ENCODE measurements at regions of chr7 and their contacts with region 1.

Region 1: GRCh38 chr7:44606450-44607254 is at the start of gene OGDH:
- DNase-seq: peak; percentile 97 to 100 (median 99)
- ATAC-seq: peak; percentile 91
- H3K4me3 ChIP-seq: peak within 1 kb of the TSS; percentile 69
- H3K4me3 Mint-ChIP-seq: peak within 1 kb of the TSS; percentile 100
- H3K27ac ChIP-seq: peak within 1 kb of the TSS; percentile 86 to 99
- H3K27ac Mint-ChIP-seq: peak within 1 kb of the TSS; percentile 100
- H3K4me1 ChIP-seq: peaks cover 43% of the 10 kb centered on the region
- H3K4me1 Mint-ChIP-seq: peaks cover 44% of the 10 kb centered on the region
- H3K27me3 ChIP-seq: no peaks in the 10 kb centered on the region
- H3K27me3 Mint-ChIP-seq: peaks cover 5% of the 10 kb centered on the region
- CTCF ChIP-seq: no peak
- total RNA-seq, gene OGDH: 39.8 to 43.8 TPM

Region 2: GRCh38 chr7:44534501-44534900 is 72.2 kb before region 1 on chr7:
- CTCF ChIA-PET with region 1: no interaction called
- POLR2A ChIA-PET with region 1: no interaction called
- intact Hi-C with region 1: no loop called
- DNase-seq: peak in 11 of 14 experiments; percentile 2 to 66 (median 24)
- ATAC-seq: peak; percentile 74
- H3K4me3 ChIP-seq: no peak overlapping the region
- H3K4me3 Mint-ChIP-seq: no peak overlapping the region
- H3K27ac ChIP-seq: no peak overlapping the region
- H3K27ac Mint-ChIP-seq: no peak overlapping the region
- H3K4me1 ChIP-seq: no peaks in the 10 kb centered on the region
- H3K4me1 Mint-ChIP-seq: no peaks in the 10 kb centered on the region
- H3K27me3 ChIP-seq: no peaks in the 10 kb centered on the region
- H3K27me3 Mint-ChIP-seq: no peaks in the 10 kb centered on the region
- CTCF ChIP-seq: peak; percentile 52

Region 3: GRCh38 chr7:44547536-44548231 is 59.0 kb before region 1 on chr7:
- CTCF ChIA-PET with region 1: no interaction called
- POLR2A ChIA-PET with region 1: no interaction called
- intact Hi-C with region 1: no loop called
- DNase-seq: no peak
- ATAC-seq: no peak
- H3K4me3 ChIP-seq: no peak overlapping the region
- H3K4me3 Mint-ChIP-seq: no peak overlapping the region
- H3K27ac ChIP-seq: no peak overlapping the region
- H3K27ac Mint-ChIP-seq: no peak overlapping the region
- H3K4me1 ChIP-seq: no peaks in the 10 kb centered on the region
- H3K4me1 Mint-ChIP-seq: no peaks in the 10 kb centered on the region
- H3K27me3 ChIP-seq: no peaks in the 10 kb centered on the region
- H3K27me3 Mint-ChIP-seq: peaks cover 5% of the 10 kb centered on the region
- CTCF ChIP-seq: no peak

Region 4: GRCh38 chr7:44559485-44559884 is 47.2 kb before region 1 on chr7:
- CTCF ChIA-PET with region 1: no interaction called
- POLR2A ChIA-PET with region 1: no interaction called
- intact Hi-C with region 1: no loop called
- DNase-seq: no peak
- ATAC-seq: no peak
- H3K4me3 ChIP-seq: no peak overlapping the region
- H3K4me3 Mint-ChIP-seq: no peak overlapping the region
- H3K27ac ChIP-seq: no peak overlapping the region
- H3K27ac Mint-ChIP-seq: peak overlapping the region; percentile 17
- H3K4me1 ChIP-seq: no peaks in the 10 kb centered on the region
- H3K4me1 Mint-ChIP-seq: no peaks in the 10 kb centered on the region
- H3K27me3 ChIP-seq: no peaks in the 10 kb centered on the region
- H3K27me3 Mint-ChIP-seq: no peaks in the 10 kb centered on the region
- CTCF ChIP-seq: no peak

Region 5: GRCh38 chr7:44573464-44574286 is 33.0 kb before region 1 on chr7 and contains the start of gene DDX56:
- CTCF ChIA-PET with region 1: no interaction called
- POLR2A ChIA-PET with region 1: interaction called, 26 read pairs
- intact Hi-C with region 1: no loop called
- DNase-seq: peak; percentile 83 to 97 (median 90)
- ATAC-seq: peak; percentile 96
- H3K4me3 ChIP-seq: peak within 1 kb of the TSS; percentile 71
- H3K4me3 Mint-ChIP-seq: peak within 1 kb of the TSS; percentile 95
- H3K27ac ChIP-seq: peak within 1 kb of the TSS; percentile 77 to 82
- H3K27ac Mint-ChIP-seq: peak within 1 kb of the TSS; percentile 99
- H3K4me1 ChIP-seq: peaks cover 35% of the 10 kb centered on the region
- H3K4me1 Mint-ChIP-seq: peaks cover 48% of the 10 kb centered on the region
- H3K27me3 ChIP-seq: no peaks in the 10 kb centered on the region
- H3K27me3 Mint-ChIP-seq: no peaks in the 10 kb centered on the region
- CTCF ChIP-seq: no peak
- total RNA-seq, gene DDX56: 126 to 127 TPM

Region 6: GRCh38 chr7:44622307-44623151 is 15.9 kb after region 1 on chr7:
- CTCF ChIA-PET with region 1: interaction called, 4 read pairs
- POLR2A ChIA-PET with region 1: interaction called, 229 read pairs
- intact Hi-C with region 1: no loop called
- DNase-seq: peak in 6 of 14 experiments; percentile 22 to 66 (median 58)
- ATAC-seq: peak; percentile 67
- H3K4me3 ChIP-seq: peak overlapping the region; percentile 23
- H3K4me3 Mint-ChIP-seq: peak overlapping the region; percentile 13
- H3K27ac ChIP-seq: peak overlapping the region in 1 of 2 donors; percentile 85
- H3K27ac Mint-ChIP-seq: peak overlapping the region; percentile 84
- H3K4me1 ChIP-seq: peaks cover 84% of the 10 kb centered on the region
- H3K4me1 Mint-ChIP-seq: peaks cover 87% of the 10 kb centered on the region
- H3K27me3 ChIP-seq: no peaks in the 10 kb centered on the region
- H3K27me3 Mint-ChIP-seq: no peaks in the 10 kb centered on the region
- CTCF ChIP-seq: no peak

Region 7: DNA sequence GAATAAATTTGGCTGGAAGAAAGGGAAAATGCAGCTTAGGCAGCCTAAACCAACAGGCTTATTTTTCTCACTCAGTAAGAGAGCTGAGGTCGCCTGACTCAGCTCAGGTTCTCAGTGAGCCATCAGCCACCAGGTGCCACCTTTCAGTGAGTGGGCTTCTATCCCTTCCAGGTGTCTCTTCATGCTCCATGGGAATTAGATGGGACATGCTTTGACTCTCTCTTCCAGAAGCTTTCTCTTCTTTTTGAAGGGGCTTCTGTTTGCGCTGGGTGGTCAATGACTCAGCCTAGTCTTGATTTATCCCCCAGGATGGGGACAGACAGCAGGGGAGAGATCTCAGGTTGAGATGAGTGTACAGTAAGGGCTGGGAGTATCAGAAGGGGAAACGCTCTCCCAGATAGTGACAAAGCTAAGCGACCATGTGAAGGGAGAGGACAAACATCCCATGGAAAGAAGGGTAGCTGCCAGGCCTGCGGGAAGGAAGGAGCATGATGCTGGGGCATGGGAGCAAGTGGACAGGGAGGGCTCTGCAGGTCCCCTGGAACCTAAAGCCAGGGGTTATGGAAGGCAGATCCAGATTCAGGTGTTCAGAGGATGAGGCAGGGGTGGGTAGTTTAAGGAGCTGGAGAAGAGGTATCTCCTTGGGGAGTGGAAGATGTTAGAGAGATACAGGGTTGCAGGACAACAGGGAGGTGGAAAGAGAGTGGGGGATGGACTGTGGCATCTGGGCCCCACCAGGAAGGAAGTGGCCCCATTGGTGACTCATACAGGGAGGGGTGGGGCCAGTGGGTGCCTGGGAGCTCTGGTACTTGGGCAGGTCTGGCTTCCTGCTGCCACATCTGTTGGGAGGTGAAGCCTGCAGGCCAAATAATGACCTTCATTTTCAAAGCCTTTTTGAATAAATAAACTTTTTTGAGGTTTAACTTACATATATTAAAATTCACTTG is 32.2 kb after region 1 on chr7:
- CTCF ChIA-PET with region 1: interaction called, 9 read pairs
- POLR2A ChIA-PET with region 1: interaction called, 229 read pairs
- intact Hi-C with region 1: loop called (anchors 1 to 2 kb)
- DNase-seq: peak; percentile 58 to 93 (median 78)
- ATAC-seq: peak; percentile 55
- H3K4me3 ChIP-seq: peak overlapping the region; percentile 21
- H3K4me3 Mint-ChIP-seq: peak overlapping the region; percentile 89
- H3K27ac ChIP-seq: peak overlapping the region; percentile 90 to 95
- H3K27ac Mint-ChIP-seq: peak overlapping the region; percentile 96
- H3K4me1 ChIP-seq: peaks cover 86% of the 10 kb centered on the region
- H3K4me1 Mint-ChIP-seq: peaks cover 72% of the 10 kb centered on the region
- H3K27me3 ChIP-seq: no peaks in the 10 kb centered on the region
- H3K27me3 Mint-ChIP-seq: no peaks in the 10 kb centered on the region
- CTCF ChIP-seq: no peak

Region 8: GRCh38 chr7:44767912-44768627 is 161.4 kb after region 1 on chr7:
- CTCF ChIA-PET with region 1: no interaction called
- POLR2A ChIA-PET with region 1: interaction called, 14 read pairs
- intact Hi-C with region 1: no loop called
- DNase-seq: peak in 10 of 14 experiments; percentile 19 to 68 (median 40)
- ATAC-seq: peak; percentile 88
- H3K4me3 ChIP-seq: no peak overlapping the region
- H3K4me3 Mint-ChIP-seq: peak overlapping the region; percentile 8
- H3K27ac ChIP-seq: peak overlapping the region; percentile 14 to 48
- H3K27ac Mint-ChIP-seq: peak overlapping the region; percentile 83
- H3K4me1 ChIP-seq: peaks cover 40% of the 10 kb centered on the region
- H3K4me1 Mint-ChIP-seq: peaks cover 40% of the 10 kb centered on the region
- H3K27me3 ChIP-seq: no peaks in the 10 kb centered on the region
- H3K27me3 Mint-ChIP-seq: no peaks in the 10 kb centered on the region
- CTCF ChIP-seq: no peak

Region 9: DNA sequence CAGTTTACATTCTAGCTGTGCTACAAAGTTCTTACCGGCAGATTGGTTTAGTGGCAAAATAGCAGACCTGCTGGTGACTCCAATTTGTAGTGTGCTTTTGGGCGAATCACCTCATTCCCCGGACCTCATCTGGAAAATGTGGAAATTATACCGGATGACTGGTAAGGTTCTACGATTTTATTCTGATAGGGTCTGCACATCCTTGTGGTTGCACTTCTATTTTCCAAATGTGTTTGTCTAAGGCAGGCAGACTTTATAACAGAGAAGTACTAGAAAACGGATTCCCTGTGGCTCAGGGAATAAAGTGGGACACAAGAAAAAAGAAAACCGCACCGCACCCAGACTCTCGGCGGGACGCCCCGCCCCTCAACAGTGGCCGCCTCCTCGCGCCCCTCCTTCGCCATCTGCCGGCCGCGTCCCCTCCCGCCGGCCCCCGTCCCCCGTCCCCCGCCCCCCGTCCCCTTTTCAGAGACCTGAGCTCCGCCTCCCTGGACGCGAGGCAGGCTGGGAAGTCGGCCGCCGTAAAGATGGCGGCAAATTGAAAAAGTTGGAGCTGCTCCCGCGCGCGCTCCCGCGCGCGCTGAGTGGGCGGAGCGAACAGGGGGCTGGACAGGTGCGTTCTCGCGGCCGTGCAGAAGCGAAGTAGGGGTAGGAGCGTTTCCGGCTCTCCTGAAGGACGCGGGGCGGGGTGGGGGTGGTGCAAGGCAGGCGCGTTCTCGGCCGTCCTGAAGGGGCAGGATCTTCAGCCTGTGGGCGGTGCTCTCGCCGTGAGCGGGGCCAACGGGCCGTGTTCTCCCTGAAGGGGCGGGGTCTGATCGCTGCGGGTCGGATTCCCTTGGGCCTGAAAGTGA is 392.8 kb after region 1 on chr7:
- CTCF ChIA-PET with region 1: no interaction called
- POLR2A ChIA-PET with region 1: interaction called, 11 read pairs
- intact Hi-C with region 1: no loop called
- DNase-seq: peak; percentile 98 to 100 (median 99)
- ATAC-seq: peak; percentile 79
- H3K4me3 ChIP-seq: peak overlapping the region; percentile 69
- H3K4me3 Mint-ChIP-seq: peak overlapping the region; percentile 99
- H3K27ac ChIP-seq: peak overlapping the region; percentile 76 to 78
- H3K27ac Mint-ChIP-seq: peak overlapping the region; percentile 99
- H3K4me1 ChIP-seq: peaks cover 58% of the 10 kb centered on the region
- H3K4me1 Mint-ChIP-seq: peaks cover 52% of the 10 kb centered on the region
- H3K27me3 ChIP-seq: no peaks in the 10 kb centered on the region
- H3K27me3 Mint-ChIP-seq: no peaks in the 10 kb centered on the region
- CTCF ChIP-seq: no peak

Measured in CD4-positive, alpha-beta T cell (primary cell).